BJ (cell line): ENCODE measurements at regions of chr6 and their contacts with region 1.

Region 1: GRCh38 chr6:84449220-84449619 is 221.8 kb upstream of the CEP162 start:
- DNase-seq: no peak
- H3K4me3 ChIP-seq: no peak overlapping the region
- H3K27me3 ChIP-seq: no peaks in the 10 kb centered on the region
- CTCF ChIP-seq: no peak

Region 2: GRCh38 chr6:84921891-84922290 is 472.7 kb after region 1 on chr6:
- CTCF ChIA-PET with region 1: interaction called, 13 read pairs
- POLR2A ChIA-PET with region 1: no interaction called
- DNase-seq: no peak
- H3K4me3 ChIP-seq: no peak overlapping the region
- H3K27me3 ChIP-seq: no peaks in the 10 kb centered on the region
- CTCF ChIP-seq: no peak